Activated naive CD4-positive, alpha-beta T cell treated with anti-CD3 and anti-CD28 coated beads, Interleukin-2, amount 10 ng/mL, durations not matched to agents 7 days and 5 days (primary cell): ENCODE measurements at regions of chr11 and their contacts with region 1.

Region 1: DNA sequence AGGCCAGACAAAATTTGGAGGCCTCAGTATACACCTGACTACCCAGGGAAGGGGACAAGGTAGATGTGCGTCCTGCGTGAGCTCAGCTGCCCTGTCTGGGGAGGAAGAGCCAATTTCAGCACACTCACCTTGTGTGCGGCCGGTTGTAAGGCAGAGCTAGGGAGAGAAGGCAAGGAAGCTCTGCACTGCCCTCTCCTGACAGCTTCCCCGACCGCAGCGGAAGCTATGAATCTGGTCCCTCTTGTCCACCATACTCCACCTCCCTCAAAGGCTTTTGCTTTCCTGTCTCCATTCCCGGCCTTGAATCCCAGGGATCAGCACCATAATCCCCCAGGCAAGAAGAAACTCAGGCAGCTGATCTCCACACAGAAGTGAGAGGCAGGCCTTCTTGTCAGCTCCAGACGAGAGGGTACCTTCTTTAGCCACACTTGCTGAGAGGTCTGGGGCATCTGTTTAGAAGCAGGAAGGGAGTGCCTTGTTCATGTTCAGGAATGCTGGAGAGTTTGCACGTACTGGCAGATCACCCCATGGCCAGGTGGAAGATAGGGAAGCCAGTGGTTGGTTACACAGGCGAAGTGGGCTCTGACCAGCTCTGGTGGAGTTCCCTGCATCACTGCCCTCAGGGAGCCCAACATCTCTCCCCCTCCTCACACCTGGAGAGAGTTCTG is 62.5 kb downstream of the FEZ1 start:
- DNase-seq: peak; percentile 33
- H3K4me3 Mint-ChIP-seq: no peak overlapping the region
- H3K27ac Mint-ChIP-seq: no peak overlapping the region
- H3K4me1 Mint-ChIP-seq: no peaks in the 10 kb centered on the region
- H3K27me3 Mint-ChIP-seq: peaks cover 14% of the 10 kb centered on the region

Region 2: GRCh38 chr11:125451400-125452124 is 18.0 kb after region 1 on chr11:
- CTCF ChIA-PET with region 1: interaction called, 10 read pairs
- DNase-seq: no peak
- H3K4me3 Mint-ChIP-seq: no peak overlapping the region
- H3K27ac Mint-ChIP-seq: no peak overlapping the region
- H3K4me1 Mint-ChIP-seq: no peaks in the 10 kb centered on the region
- H3K27me3 Mint-ChIP-seq: peaks cover 10% of the 10 kb centered on the region

Region 3: DNA sequence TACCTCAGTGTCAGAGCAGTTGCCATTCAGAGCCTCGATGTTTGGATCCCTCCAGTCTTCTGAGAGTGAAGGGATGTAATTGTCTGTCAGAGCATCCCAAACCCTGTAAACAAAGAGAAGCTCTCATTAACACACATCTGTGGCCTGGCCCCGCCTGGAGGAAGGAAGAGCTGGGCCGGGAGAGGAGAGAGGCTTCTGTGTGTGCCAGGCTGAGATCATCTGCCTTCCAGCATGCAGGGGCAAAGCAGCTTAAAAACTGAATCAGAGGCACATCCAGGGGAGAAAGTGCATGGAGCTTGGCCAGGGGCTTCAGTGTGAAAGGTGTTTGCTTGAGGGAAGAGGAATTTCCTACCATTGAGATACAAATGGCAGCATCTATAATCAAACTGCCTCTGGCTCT is 47.9 kb after region 1 on chr11:
- CTCF ChIA-PET with region 1: no interaction called
- DNase-seq: no peak
- H3K4me3 Mint-ChIP-seq: no peak overlapping the region
- H3K27ac Mint-ChIP-seq: no peak overlapping the region
- H3K4me1 Mint-ChIP-seq: no peaks in the 10 kb centered on the region
- H3K27me3 Mint-ChIP-seq: peaks cover 19% of the 10 kb centered on the region

Region 4: GRCh38 chr11:125559888-125560287 is 126.3 kb after region 1 on chr11:
- CTCF ChIA-PET with region 1: no interaction called
- DNase-seq: no peak
- H3K4me3 Mint-ChIP-seq: no peak overlapping the region
- H3K27ac Mint-ChIP-seq: no peak overlapping the region
- H3K4me1 Mint-ChIP-seq: peaks cover 4% of the 10 kb centered on the region
- H3K27me3 Mint-ChIP-seq: no peaks in the 10 kb centered on the region